ENCODE measurements at regions of chr7 and their contacts with region 1.

Region 1: GRCh38 chr7:158043551-158044481 is 543.8 kb downstream of the PTPRN2 start:
- DNase-seq: peak in 2 of 10 donors; percentile 50 to 55

Region 2: DNA sequence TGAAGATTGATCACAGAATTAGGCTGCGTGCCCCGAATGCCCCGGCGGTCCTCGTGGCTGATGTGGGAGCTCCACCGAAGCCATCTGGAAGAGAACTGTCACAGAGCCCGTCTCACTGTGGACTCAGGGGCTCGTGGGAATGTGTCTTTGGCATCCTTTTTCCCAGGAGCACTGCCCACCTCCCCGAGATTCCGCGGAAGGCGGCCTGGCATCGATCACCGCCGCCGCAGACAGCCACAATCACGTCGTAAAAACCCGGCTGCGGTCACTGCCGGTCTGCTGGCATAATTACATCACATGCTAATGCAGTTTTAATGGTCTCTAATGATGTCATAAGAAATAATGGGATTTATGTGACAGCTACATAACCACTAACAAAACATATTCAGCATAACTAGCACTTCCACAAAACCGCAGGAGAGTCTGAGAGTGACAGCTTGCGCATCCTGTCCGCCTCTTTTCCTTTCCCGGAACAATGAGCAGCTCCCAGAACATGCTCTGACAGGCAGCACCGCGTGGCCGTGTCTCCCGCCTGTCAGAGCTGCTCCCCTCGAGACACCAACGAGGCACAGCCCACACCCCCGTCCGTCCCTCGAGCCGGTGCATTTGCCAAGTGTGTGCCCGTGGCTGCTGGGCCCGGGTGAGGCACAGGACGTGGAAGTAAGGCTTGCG is 53.8 kb after region 1 on chr7:
- intact Hi-C with region 1: loop called (anchors 5 kb)
- DNase-seq: peak in 1 of 10 donors; percentile 73